ENCODE measurements at regions of chr6 and their contacts with region 1.

Region 1: GRCh38 chr6:151999194-151999593 is 191.7 kb downstream of the ESR1 start:
- DNase-seq: no peak
- ATAC-seq: no peak
- H3K4me3 ChIP-seq: no peak overlapping the region
- H3K27ac ChIP-seq: no peak overlapping the region
- H3K4me1 ChIP-seq: no peaks in the 10 kb centered on the region
- H3K27me3 ChIP-seq: no peaks in the 10 kb centered on the region
- CTCF ChIP-seq: no peak

Region 2: DNA sequence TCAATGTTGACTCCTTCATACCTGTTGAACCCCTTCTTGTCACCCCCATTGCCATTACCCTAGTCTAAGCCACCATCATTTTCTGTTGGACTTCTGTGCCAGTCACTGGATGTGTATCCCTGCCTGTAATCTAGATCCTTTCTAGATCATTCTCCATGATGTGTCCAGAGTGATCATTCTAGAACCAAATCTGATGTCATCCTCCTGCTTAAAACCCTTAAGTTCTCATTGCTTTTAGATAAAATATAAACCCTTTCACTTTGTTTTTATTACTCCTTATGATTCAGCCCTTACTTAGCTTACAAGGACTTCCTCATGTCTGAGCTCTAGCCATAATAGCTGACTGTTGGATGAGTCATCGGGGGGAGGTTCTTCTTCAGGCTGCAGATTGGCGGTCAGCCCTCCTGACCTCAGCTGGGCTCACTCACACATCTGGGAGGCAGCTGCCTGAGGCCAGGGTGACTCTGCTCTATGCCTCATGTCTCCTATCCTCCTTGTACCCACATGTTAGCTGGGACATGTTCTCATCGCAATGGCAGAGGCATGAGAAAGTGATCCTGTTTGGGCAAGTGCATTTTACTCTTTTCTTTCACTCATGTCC is 95.9 kb after region 1 on chr6:
- CTCF ChIA-PET with region 1: no interaction called
- POLR2A ChIA-PET with region 1: no interaction called
- in situ Hi-C with region 1: loop called (anchors 25 kb)
- intact Hi-C with region 1: no loop called
- DNase-seq: peak; percentile 24
- ATAC-seq: peak; percentile 84
- H3K4me3 ChIP-seq: no peak overlapping the region
- H3K27ac ChIP-seq: no peak overlapping the region
- H3K4me1 ChIP-seq: no peaks in the 10 kb centered on the region
- H3K27me3 ChIP-seq: no peaks in the 10 kb centered on the region
- CTCF ChIP-seq: no peak

Region 3: GRCh38 chr6:152484806-152485205 is 485.6 kb after region 1 on chr6:
- CTCF ChIA-PET with region 1: no interaction called
- POLR2A ChIA-PET with region 1: no interaction called
- in situ Hi-C with region 1: no loop called
- intact Hi-C with region 1: no loop called
- DNase-seq: no peak
- ATAC-seq: no peak
- H3K4me3 ChIP-seq: no peak overlapping the region
- H3K27ac ChIP-seq: no peak overlapping the region
- H3K4me1 ChIP-seq: no peaks in the 10 kb centered on the region
- H3K27me3 ChIP-seq: no peaks in the 10 kb centered on the region
- CTCF ChIP-seq: no peak